Cardiac septum (tissue), 1 donor: ENCODE measurements at regions of chr13 and their contacts with region 1.

Region 1: DNA sequence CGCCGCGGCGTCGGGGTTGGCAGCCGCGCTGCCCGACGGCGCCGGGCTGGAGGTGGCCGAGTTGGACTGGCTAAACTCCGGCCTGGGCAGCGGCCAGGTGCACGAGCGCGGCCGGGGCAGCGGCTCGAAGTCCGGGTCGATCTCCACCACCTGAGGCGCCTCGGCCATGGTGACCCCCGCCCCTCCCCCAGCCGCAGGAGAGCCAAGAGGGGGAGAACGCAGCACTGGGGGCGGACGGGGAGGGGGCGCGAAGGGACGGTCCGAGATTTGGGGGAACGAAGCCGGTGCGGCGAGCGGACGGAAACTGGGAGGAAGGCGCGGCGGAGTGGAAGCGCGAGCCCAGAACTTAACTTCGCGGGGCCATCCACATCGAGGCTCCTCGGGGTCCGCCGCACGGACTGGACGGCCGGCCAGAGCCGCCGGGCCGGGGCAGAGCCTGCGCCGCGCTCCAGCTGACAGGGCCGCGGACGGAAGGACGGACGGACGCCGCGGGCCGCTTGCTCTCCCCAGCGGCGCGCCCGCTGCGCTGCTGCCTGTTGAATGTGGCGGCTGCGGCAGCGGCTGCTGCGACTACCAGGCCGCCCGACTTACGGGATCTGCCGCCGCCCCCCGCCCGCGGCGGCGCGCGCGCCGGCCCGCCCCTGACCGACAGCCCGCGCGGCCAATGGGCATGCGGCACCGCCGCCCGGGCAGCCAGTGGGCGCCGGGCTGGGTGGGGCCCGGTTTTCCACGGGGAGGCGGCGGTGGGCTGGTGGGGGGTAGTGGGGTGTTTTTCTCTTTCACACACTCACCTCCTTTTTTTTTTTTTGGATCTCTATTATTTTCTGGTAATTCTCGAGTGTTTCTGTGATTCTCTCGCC is at the start of gene FOXO1:
- DNase-seq: peak; percentile 93
- total RNA-seq, gene FOXO1: 14.6 TPM

Region 2: GRCh38 chr13:40190641-40191100 is 475.6 kb before region 1 on chr13:
- intact Hi-C with region 1: loop called (anchors 5 kb)
- DNase-seq: no peak

Region 3: DNA sequence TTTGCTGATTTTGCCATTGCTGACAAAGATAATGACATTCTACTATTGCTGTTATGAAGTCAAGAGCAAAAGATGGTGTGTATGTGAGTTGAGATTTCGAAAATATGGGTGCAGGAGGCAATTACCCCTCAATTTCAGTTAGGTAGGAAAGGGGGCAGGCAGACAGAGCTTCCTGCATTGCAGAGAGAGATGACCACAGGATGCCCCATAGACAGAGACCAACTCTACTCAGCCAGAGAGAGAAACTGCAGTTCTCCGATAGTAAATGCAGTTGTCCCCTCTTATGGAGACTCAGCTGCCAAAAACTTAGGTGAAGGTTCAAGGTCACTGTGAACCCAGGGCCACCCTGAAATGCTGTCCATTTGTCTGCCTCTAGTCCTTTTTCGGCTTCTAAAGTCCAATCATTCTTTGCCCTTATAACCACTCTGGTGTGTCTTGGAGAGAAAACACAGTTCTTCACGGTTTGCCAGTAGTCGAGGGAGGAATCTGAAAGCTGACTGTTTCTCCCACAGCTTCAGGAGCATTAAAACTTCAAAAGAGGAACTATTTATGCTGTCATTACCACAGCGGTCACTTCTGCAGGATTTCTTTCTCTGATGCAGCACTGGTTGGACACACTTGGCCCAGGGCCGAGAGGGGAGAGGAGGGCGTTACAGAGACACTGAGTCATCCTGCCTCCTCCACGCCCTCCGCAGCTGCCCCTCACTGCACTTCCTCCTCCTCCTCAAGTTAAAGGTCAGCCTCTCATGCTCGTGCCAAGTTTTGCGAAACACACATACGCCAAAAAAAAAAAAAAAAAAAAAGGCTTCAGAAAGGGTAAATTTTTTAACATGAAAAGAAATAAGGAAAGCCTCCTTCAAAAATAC is 264.1 kb before region 1 on chr13:
- intact Hi-C with region 1: loop called (anchors 1 kb)
- DNase-seq: peak; percentile 97

Region 4: DNA sequence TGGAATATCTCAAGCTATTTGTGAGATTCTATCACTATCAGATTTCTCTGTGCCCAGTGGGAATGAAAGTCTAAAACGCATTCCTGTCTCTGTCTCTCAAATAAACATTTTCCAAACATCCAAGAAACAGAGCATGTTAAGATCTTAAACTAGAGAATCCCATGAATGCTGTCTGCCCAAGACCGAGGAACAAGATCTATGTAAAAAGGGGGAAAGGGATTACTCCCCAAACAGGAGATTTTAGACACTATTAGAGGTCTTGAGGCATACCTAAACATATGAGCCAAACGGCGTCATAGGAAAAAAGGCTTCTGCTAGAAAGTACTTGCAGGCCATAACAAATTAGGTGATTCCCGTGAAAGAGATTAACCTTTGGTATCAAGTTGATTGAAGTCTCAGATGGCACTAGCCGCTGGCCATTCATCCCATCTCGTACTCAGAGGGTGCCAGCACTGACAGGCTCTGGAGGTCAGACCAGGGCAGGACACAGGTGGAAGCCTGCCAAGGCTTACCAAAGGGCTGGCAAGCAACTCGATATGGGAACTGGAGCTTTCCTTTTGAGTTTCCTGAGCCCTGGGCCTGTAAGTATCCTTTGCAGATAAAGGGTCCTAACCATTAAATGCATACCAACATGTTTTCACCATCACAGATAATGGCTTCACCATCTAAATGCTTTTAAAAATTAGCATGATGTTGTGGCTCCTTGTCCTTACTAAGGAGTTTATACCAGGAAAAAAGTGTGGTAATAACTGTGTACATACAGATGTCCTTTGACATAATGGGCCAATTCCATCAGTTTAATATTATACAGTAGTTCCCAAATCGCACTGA is 225.1 kb before region 1 on chr13:
- intact Hi-C with region 1: loop called (anchors 2 kb)
- DNase-seq: peak; percentile 88

Region 5: GRCh38 chr13:40477623-40478608 is 188.4 kb before region 1 on chr13:
- intact Hi-C with region 1: loop called (anchors 5 kb)
- DNase-seq: peak; percentile 77

Region 6: DNA sequence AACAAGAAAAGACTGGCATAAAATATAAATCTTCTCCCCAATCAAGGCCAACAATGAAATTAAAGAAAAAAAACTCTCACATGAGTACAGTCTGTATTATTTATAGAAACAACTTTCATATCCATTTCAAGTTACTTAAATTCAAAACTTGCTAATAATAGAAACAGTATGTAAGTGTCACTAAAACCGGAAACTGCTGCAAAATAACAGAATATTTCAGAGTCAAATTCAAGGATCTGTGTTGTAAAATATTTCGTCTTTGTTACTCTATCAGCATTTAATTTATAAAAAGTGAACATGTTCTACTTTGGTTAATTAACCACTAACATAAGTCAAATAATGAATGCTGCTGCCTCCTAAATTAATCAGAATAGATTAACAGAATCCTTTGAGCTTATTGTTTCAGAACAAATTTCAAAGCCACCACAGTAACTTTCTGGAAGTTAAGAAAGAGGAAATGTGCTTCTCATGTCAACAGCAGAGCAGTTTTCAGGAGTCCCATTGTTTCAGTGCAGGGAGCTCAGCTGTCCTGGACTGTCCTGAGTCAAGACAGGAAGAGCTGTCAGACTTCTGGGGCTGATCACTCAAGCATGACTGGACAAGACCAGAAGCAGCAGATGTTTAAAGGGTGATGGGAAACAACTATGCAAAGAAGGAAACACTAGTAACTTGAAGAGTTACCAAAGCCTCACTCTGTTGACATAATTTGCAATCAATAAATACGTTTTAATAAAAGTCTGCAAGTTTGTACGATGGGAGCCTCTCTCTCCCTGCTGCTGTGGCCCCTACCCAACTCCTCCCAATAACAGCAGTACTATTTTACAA is 76.8 kb before region 1 on chr13:
- intact Hi-C with region 1: loop called (anchors 5 kb)
- DNase-seq: peak; percentile 80